Activated CD8-positive, alpha-beta memory T cell treated with anti-CD3 and anti-CD28 coated beads, Interleukin-2, amount 10 ng/mL, durations not matched to agents 7 days and 5 days (primary cell): ENCODE measurements at regions of chr13 and their contacts with region 1.

Region 1: GRCh38 chr13:27953676-27954405 is 15.3 kb downstream of the CDX2 start:
- DNase-seq: peak; percentile 68
- ATAC-seq: peak; percentile 96
- H3K4me3 Mint-ChIP-seq: peak overlapping the region; percentile 59
- H3K27ac Mint-ChIP-seq: no peak overlapping the region
- H3K4me1 Mint-ChIP-seq: peaks cover 11% of the 10 kb centered on the region
- H3K27me3 Mint-ChIP-seq: peaks cover 71% of the 10 kb centered on the region

Region 2: DNA sequence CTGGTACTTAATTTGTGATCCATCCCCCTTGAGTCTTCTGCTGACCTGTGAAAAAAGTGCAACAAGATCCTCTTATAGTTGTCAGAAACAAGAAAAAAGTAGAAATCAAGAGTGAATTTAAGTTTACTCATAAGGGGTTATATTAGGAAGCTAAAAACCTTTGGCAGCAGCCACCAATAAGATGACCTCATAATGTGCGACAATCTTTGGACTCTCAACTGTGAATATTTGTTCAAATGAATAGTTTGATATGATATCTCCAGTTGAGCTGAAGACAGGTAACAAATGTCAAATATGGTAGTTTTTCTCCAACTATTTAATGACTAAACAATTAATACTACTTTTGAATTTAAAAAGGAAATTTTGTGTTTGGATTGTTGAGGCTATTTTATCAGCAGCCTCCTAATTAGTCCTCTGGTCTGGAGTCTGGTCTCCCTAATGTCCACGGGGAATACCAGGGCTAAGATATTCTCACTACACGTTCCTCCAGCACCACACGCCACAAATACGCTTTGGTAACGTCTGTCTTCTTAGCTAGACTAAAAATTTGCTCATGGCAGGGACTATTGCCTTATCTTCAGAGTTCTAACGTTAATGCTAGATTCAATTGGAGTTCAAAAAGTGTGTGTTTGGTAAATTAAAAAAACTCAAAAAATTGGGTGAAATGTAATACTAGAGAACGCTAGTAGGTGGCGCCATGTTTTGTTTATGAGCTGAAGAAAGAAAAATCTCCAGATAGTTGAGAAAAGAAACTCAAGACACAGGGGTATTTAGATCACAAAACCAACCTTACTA is 85.0 kb before region 1 on chr13:
- CTCF ChIA-PET with region 1: interaction called, 11 read pairs
- DNase-seq: no peak
- ATAC-seq: no peak
- H3K4me3 Mint-ChIP-seq: no peak overlapping the region
- H3K27ac Mint-ChIP-seq: no peak overlapping the region
- H3K4me1 Mint-ChIP-seq: no peaks in the 10 kb centered on the region
- H3K27me3 Mint-ChIP-seq: peaks cover 32% of the 10 kb centered on the region

Region 3: GRCh38 chr13:27933580-27934328 is 20.1 kb before region 1 on chr13:
- CTCF ChIA-PET with region 1: interaction called, 14 read pairs
- DNase-seq: no peak
- ATAC-seq: no peak
- H3K4me3 Mint-ChIP-seq: no peak overlapping the region
- H3K27ac Mint-ChIP-seq: no peak overlapping the region
- H3K4me1 Mint-ChIP-seq: no peaks in the 10 kb centered on the region
- H3K27me3 Mint-ChIP-seq: peaks cover 39% of the 10 kb centered on the region

Region 4: GRCh38 chr13:27980280-27980998 is 26.6 kb after region 1 on chr13:
- CTCF ChIA-PET with region 1: interaction called, 16 read pairs
- DNase-seq: no peak
- ATAC-seq: no peak
- H3K4me3 Mint-ChIP-seq: no peak overlapping the region
- H3K27ac Mint-ChIP-seq: no peak overlapping the region
- H3K4me1 Mint-ChIP-seq: peaks cover 17% of the 10 kb centered on the region
- H3K27me3 Mint-ChIP-seq: peaks cover 81% of the 10 kb centered on the region